CD8-positive, alpha-beta memory T cell (primary cell): ENCODE measurements at regions of chr1 and their contacts with region 1.

Region 1: GRCh38 chr1:112466078-112466660 is 42.6 kb upstream of the WNT2B start:
- DNase-seq: peak; percentile 74 to 86 (median 75)
- H3K4me3 ChIP-seq: peak overlapping the region; percentile 35
- H3K4me3 Mint-ChIP-seq: peak overlapping the region; percentile 9 to 87 (median 82)
- H3K27ac ChIP-seq: no peak overlapping the region
- H3K27ac Mint-ChIP-seq: peak overlapping the region in 2 of 8 donors; percentile 8 to 33
- H3K4me1 ChIP-seq: no peaks in the 10 kb centered on the region
- H3K4me1 Mint-ChIP-seq: peaks cover 12 to 14% (median 13%) of the 10 kb centered on the region in 3 donors
- H3K27me3 ChIP-seq: peaks cover 7% of the 10 kb centered on the region
- H3K27me3 Mint-ChIP-seq: peaks cover 6 to 41% of the 10 kb centered on the region in 2 donors

Region 2: DNA sequence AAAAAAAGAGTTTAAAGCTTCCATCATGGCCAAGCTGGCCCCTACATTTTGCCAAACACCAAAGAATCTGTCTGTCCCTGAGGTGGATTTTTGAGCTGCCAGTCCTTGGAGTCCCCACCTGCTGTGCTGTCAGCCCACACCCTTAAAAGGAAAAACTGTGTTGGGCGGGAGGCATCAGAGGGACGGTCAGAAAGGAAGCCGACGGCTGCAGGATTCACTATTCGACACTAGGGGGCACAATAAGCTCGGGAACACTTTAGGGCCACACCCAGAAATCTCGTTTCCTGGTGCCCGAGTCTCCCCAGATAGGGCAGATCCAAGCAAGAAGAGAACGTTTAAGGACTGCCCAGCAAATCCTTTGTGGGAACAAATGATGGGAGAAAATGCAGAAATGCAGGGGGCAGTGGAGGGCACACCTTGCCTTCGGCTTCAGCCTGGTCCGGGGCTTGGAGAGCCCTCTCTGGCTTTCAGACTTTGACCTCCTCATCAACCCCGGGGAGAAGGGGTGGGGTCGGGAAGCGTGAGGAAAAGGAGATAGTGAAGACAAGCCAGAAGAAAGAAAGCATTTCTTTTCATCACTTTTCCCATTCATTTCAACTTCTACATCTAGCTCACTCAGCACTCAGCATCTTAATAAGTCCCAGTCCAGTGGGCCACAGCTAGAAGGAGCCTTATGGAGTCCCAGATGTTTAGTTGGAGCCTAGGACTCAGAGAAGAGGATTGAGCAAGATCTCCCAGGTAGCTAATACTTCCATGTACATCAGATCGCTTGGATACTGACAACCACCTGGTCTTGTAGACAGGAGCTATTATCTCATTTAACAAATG is 75.2 kb before region 1 on chr1:
- CTCF ChIA-PET with region 1: interaction called, 77 read pairs
- POLR2A ChIA-PET with region 1: no interaction called
- DNase-seq: peak; percentile 60 to 82 (median 71)
- H3K4me3 ChIP-seq: no peak overlapping the region
- H3K4me3 Mint-ChIP-seq: peak overlapping the region in 5 of 7 donors; percentile 15 to 49 (median 45)
- H3K27ac ChIP-seq: no peak overlapping the region
- H3K27ac Mint-ChIP-seq: no peak overlapping the region
- H3K4me1 ChIP-seq: peaks cover 13% of the 10 kb centered on the region
- H3K4me1 Mint-ChIP-seq: peaks cover 10 to 14% (median 14%) of the 10 kb centered on the region in 3 donors
- H3K27me3 ChIP-seq: no peaks in the 10 kb centered on the region
- H3K27me3 Mint-ChIP-seq: peaks cover 32 to 53% of the 10 kb centered on the region in 2 donors

Region 3: GRCh38 chr1:112406771-112407170 is 59.4 kb before region 1 on chr1:
- CTCF ChIA-PET with region 1: no interaction called
- POLR2A ChIA-PET with region 1: no interaction called
- DNase-seq: no peak
- H3K4me3 ChIP-seq: no peak overlapping the region
- H3K4me3 Mint-ChIP-seq: no peak overlapping the region
- H3K27ac ChIP-seq: no peak overlapping the region
- H3K27ac Mint-ChIP-seq: no peak overlapping the region
- H3K4me1 ChIP-seq: no peaks in the 10 kb centered on the region
- H3K4me1 Mint-ChIP-seq: no peaks in the 10 kb centered on the region
- H3K27me3 ChIP-seq: no peaks in the 10 kb centered on the region
- H3K27me3 Mint-ChIP-seq: peaks cover 3 to 6% of the 10 kb centered on the region in 2 donors